ENCODE measurements at regions of chr18 and their contacts with region 1.

Region 1: GRCh38 chr18:31722369-31722957 is 38.1 kb upstream of the B4GALT6 start:
- DNase-seq: peak; percentile 92
- H3K4me3 Mint-ChIP-seq: no peak overlapping the region
- H3K27ac Mint-ChIP-seq: no peak overlapping the region
- H3K4me1 Mint-ChIP-seq: peaks cover 9% of the 10 kb centered on the region
- H3K27me3 Mint-ChIP-seq: peaks cover 30% of the 10 kb centered on the region

Region 2: DNA sequence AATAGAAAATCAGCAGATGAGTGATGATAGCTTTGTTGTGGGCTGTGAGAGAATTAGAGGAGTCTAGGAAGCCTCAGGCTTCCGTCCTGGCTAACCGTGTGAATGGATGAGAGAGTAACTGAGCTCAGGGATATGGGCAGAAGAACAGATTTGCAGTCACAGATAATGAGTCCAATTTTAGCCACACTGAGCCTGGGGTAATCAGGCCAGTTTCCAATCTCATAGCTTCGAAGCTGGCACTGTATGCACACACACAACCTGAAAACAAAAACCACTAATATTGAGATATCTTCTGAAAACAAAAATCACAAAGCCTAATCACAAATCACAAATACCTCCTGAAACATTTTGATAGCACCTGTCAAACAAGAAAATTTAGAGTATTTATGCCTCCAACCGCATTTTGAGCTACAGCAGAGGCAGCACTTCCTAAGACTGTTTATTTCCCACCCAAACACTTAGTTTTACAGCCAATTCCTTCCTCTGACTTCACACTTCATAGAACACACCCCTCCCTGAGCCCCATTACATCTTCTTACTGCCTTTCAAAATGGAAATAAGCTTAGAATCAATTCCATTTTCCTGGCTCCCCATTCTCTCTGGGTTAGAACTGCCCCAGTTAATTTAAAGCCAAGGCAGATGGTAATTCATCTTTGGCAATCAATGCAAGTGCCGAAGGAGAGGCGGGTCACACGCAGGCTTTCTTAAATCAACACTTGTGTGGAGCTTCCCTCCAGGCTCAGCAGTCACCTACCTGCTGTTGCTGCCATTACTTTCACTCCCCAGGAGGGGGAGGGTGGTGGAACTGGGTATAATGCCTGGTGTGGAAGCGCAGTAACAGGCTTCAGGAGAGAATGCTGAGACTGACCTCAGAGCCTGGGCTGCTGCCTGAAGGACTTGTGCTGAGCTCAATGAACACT is 111.9 kb before region 1 on chr18:
- intact Hi-C with region 1: loop called (anchors 5 kb)
- DNase-seq: no peak
- H3K4me3 Mint-ChIP-seq: no peak overlapping the region
- H3K27ac Mint-ChIP-seq: no peak overlapping the region
- H3K4me1 Mint-ChIP-seq: no peaks in the 10 kb centered on the region
- H3K27me3 Mint-ChIP-seq: peaks cover 10% of the 10 kb centered on the region